Ovary (tissue), 10 donors: ENCODE measurements at regions of chr9 and their contacts with region 1.

Region 1: DNA sequence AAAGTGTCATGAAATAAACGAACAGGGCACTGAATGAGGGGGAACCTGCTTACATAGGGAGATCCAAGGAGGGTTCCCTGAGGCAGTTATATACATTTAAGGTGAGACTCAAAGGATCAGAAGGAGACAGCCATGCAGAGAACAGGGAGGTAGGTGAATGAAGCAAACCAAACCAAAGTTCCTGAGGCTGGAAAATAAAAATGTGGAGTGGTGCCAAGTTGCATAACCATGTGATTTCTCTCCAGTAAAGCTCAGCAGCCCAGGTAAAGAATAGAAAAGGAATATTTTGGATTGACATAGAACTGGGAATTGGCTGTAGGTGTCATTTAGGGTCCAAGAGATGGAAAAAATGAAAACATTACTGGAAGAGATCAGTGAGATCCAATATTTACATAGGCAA is 110.7 kb downstream of the CAAP1 start:
- DNase-seq: no peak
- H3K4me3 ChIP-seq: no peak overlapping the region
- H3K27ac ChIP-seq: no peak overlapping the region
- H3K4me1 ChIP-seq: no peaks in the 10 kb centered on the region
- H3K27me3 ChIP-seq: no peaks in the 10 kb centered on the region
- CTCF ChIP-seq: no peak
- EP300 ChIP-seq: no peak
- POLR2A ChIP-seq: no peak

Region 2: GRCh38 chr9:26471261-26471660 is 310.6 kb before region 1 on chr9:
- intact Hi-C with region 1: no loop called
- DNase-seq: no peak
- H3K4me3 ChIP-seq: no peak overlapping the region
- H3K27ac ChIP-seq: no peak overlapping the region
- H3K4me1 ChIP-seq: no peaks in the 10 kb centered on the region
- H3K27me3 ChIP-seq: no peaks in the 10 kb centered on the region
- CTCF ChIP-seq: no peak
- EP300 ChIP-seq: no peak
- POLR2A ChIP-seq: no peak

Region 3: GRCh38 chr9:26802921-26803320 is 21.0 kb after region 1 on chr9:
- intact Hi-C with region 1: loop called in 1 of 4 experiments (anchors 2 kb)
- DNase-seq: no peak
- H3K4me3 ChIP-seq: no peak overlapping the region
- H3K27ac ChIP-seq: no peak overlapping the region
- H3K4me1 ChIP-seq: no peaks in the 10 kb centered on the region
- H3K27me3 ChIP-seq: no peaks in the 10 kb centered on the region
- CTCF ChIP-seq: no peak
- EP300 ChIP-seq: no peak
- POLR2A ChIP-seq: no peak